Right cardiac atrium (tissue), 5 donors: ENCODE measurements at regions of chr6 and their contacts with region 1.

Region 1: GRCh38 chr6:73732845-73733675 is 37.1 kb downstream of the CD109 start:
- DNase-seq: peak; percentile 42 to 78 (median 66)
- ATAC-seq: peak; percentile 74 to 88
- H3K4me3 ChIP-seq: no peak overlapping the region
- H3K27ac ChIP-seq: no peak overlapping the region
- H3K4me1 ChIP-seq: no peaks in the 10 kb centered on the region
- H3K27me3 ChIP-seq: no peaks in the 10 kb centered on the region

Region 2: DNA sequence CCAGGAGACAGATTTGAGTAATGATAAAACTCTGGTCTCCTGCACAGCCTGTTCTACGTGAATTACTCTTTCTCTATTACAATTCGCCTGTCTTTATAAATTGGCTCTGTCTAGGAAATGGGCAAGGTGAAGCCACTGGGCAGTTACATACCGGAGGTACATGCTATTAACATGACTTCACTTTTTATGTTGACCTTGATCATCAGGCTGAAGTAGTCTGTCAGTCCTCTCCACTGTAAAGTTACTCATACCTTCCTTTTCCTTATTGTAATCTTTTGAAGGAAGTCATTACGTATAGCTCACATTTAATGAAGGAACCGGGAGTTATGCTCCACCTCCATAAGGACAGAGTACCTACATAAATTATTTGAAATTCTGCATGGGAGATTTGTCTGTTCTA is 450.2 kb before region 1 on chr6:
- intact Hi-C with region 1: no loop called
- DNase-seq: no peak
- ATAC-seq: no peak
- H3K4me3 ChIP-seq: no peak overlapping the region
- H3K27ac ChIP-seq: no peak overlapping the region
- H3K4me1 ChIP-seq: no peaks in the 10 kb centered on the region
- H3K27me3 ChIP-seq: no peaks in the 10 kb centered on the region

Region 3: GRCh38 chr6:73610444-73611275 is 122.4 kb before region 1 on chr6:
- intact Hi-C with region 1: no loop called
- DNase-seq: no peak
- ATAC-seq: peak; percentile 52 to 63
- H3K4me3 ChIP-seq: no peak overlapping the region
- H3K27ac ChIP-seq: no peak overlapping the region
- H3K4me1 ChIP-seq: no peaks in the 10 kb centered on the region
- H3K27me3 ChIP-seq: no peaks in the 10 kb centered on the region

Region 4: DNA sequence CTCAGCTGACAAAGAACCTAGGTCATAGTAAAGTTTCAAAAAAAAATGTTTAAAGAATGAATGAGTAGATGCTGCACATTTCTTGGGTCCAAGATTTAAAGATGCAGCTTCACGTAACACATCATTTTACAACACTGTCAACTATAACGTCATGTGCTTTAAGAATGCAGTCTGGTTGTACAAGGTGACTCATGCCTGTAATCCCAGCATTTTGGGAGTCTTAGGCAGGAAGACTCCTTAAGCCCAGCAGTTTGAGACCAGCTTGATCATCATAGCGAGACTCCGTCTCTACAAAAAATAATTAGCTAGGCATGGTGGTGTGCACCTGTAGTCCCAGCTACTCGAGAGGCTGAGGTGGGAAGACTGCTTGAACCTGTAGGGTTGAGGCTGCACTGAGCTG is 101.2 kb before region 1 on chr6:
- intact Hi-C with region 1: no loop called
- DNase-seq: no peak
- ATAC-seq: no peak
- H3K4me3 ChIP-seq: no peak overlapping the region
- H3K27ac ChIP-seq: no peak overlapping the region
- H3K4me1 ChIP-seq: no peaks in the 10 kb centered on the region
- H3K27me3 ChIP-seq: no peaks in the 10 kb centered on the region

Region 5: GRCh38 chr6:73675466-73676098 is 57.5 kb before region 1 on chr6:
- intact Hi-C with region 1: loop called (anchors 2 to 5 kb)
- DNase-seq: peak in 2 of 3 donors; percentile 58 to 70
- ATAC-seq: peak; percentile 86
- H3K4me3 ChIP-seq: no peak overlapping the region
- H3K27ac ChIP-seq: no peak overlapping the region
- H3K4me1 ChIP-seq: peaks cover 3% of the 10 kb centered on the region
- H3K27me3 ChIP-seq: no peaks in the 10 kb centered on the region